ENCODE measurements at regions of chr17 and their contacts with region 1.

Region 1: GRCh38 chr17:16915752-16916556 is 56.0 kb downstream of the TNFRSF13B start:
- DNase-seq: no peak
- ATAC-seq: peak; percentile 77
- H3K4me3 ChIP-seq: no peak overlapping the region
- H3K27ac ChIP-seq: no peak overlapping the region
- H3K4me1 ChIP-seq: peaks cover 3% of the 10 kb centered on the region; the same call in 1 of the 2 replicates
- H3K27me3 ChIP-seq: no peaks in the 10 kb centered on the region
- CTCF ChIP-seq: peak; percentile 74

Region 2: DNA sequence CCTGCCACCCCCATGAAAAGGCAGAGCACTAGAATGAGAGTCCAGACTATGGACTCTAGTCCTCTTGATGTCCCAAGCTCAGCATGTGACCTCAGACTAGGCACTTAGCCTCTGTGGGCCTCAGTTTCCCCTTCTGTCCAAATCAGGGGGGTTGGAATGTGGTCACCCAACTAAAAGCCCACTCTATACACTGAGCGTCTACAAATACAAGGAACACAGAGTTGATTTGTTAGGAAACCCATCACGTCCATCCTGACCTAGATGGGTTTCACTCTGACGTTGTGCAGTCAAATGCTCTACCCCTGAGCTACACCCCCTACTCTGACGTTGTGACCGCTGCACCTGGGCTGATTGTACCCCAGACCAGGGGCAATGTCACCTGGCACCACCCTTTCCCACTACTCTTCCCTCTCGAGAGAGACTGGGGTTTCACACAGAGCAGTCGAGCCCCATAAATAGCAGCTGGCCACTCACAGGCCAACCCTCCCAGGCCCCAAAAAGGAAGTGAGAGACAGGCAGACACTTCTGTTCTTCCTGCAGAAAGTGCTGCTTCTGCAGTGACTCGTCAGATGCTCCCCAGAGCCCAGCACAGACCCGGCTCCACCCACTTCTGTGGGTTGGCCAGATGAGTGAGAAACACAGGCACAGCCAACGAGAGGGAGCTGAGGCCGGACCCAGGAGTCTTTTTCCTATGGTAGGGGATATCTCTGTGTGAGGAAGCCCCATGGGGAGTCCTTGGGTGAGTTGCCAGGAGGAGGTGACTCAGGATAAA is 72.1 kb after region 1 on chr17:
- CTCF ChIA-PET with region 1: no interaction called
- POLR2A ChIA-PET with region 1: no interaction called
- in situ Hi-C with region 1: no loop called
- intact Hi-C with region 1: loop called (anchors 10 kb)
- DNase-seq: no peak
- ATAC-seq: no peak
- H3K4me3 ChIP-seq: no peak overlapping the region
- H3K27ac ChIP-seq: no peak overlapping the region
- H3K4me1 ChIP-seq: no peaks in the 10 kb centered on the region
- H3K27me3 ChIP-seq: no peaks in the 10 kb centered on the region
- CTCF ChIP-seq: no peak

Measured in Panc1 (cell line).